Activated CD4-positive, alpha-beta memory T cell treated with anti-CD3 and anti-CD28 coated beads for 36 hours (primary cell): ENCODE measurements at regions of chr2 and their contacts with region 1.

Region 1: DNA sequence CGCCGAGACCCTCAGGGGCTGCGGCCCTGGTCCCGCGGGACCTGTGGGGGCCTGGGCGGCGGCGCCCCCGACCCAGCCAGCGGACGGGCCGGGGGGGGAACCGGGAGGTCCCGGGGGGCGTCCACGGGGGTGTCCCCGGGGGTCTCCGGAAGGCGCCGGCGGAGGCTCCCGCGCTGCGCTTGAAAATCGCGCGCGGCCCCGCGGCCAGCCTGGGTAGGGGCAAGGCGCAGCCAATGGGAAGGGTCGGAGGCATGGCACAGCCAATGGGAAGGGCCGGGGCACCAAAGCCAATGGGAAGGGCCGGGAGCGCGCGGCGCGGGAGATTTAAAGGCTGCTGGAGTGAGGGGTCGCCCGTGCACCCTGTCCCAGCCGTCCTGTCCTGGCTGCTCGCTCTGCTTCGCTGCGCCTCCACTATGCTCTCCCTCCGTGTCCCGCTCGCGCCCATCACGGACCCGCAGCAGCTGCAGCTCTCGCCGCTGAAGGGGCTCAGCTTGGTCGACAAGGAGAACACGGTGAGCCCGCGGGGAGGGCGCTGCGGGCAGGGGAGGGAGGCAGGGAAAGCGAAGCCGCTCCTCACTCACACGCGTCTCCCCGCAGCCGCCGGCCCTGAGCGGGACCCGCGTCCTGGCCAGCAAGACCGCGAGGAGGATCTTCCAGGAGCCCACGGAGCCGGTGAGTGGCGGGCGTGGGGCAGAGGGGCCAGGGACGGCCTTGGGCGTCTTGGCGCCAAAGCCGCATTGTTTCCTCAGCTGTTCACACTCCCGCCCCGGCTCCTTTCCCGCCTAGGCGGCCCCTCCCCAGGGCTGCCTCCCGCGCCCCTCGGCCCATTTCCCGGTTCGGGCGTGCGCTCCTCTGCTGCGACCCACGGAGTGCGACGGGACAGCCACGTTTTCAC is at the start of gene RRM2:
- DNase-seq: peak; percentile 97
- H3K4me3 Mint-ChIP-seq: peak within 1 kb of the TSS; percentile 97
- H3K27ac Mint-ChIP-seq: peak within 1 kb of the TSS; percentile 97
- H3K4me1 Mint-ChIP-seq: peaks cover 49% of the 10 kb centered on the region
- H3K27me3 Mint-ChIP-seq: peaks cover 3% of the 10 kb centered on the region
- total RNA-seq, gene RRM2: 523 to 528 TPM

Region 2: DNA sequence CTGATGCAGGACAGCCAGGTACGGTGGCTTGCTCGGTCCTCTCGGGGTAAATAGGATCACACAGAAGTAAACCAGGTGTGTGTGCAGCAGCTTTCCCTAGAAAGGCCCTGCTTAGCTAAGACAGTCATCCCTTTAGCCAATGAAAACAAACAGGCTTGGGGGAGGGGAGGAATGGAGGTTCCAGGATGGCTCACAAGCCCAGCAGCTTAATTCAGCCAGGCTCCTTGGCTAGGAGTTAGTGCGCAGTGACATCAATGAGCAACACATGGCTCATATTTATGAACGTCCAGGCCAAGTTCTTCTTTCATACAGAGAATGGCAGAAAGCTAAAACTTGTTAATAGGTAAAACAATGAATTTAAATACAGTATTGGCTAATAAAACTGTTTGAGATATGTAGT is 638.1 kb before region 1 on chr2:
- CTCF ChIA-PET with region 1: no interaction called
- POLR2A ChIA-PET with region 1: no interaction called
- intact Hi-C with region 1: no loop called
- DNase-seq: no peak
- H3K4me3 Mint-ChIP-seq: no peak overlapping the region
- H3K27ac Mint-ChIP-seq: no peak overlapping the region
- H3K4me1 Mint-ChIP-seq: peaks cover 23% of the 10 kb centered on the region
- H3K27me3 Mint-ChIP-seq: no peaks in the 10 kb centered on the region

Region 3: GRCh38 chr2:9656270-9656766 is 466.3 kb before region 1 on chr2:
- CTCF ChIA-PET with region 1: no interaction called
- POLR2A ChIA-PET with region 1: no interaction called
- intact Hi-C with region 1: loop called (anchors 2 kb)
- DNase-seq: peak; percentile 90
- H3K4me3 Mint-ChIP-seq: peak overlapping the region; percentile 40
- H3K27ac Mint-ChIP-seq: peak overlapping the region; percentile 94
- H3K4me1 Mint-ChIP-seq: peaks cover 43% of the 10 kb centered on the region
- H3K27me3 Mint-ChIP-seq: peaks cover 9% of the 10 kb centered on the region

Region 4: GRCh38 chr2:9993488-9994165 is 129.0 kb before region 1 on chr2:
- CTCF ChIA-PET with region 1: no interaction called
- POLR2A ChIA-PET with region 1: no interaction called
- intact Hi-C with region 1: no loop called
- DNase-seq: peak; percentile 57
- H3K4me3 Mint-ChIP-seq: no peak overlapping the region
- H3K27ac Mint-ChIP-seq: no peak overlapping the region
- H3K4me1 Mint-ChIP-seq: peaks cover 17% of the 10 kb centered on the region
- H3K27me3 Mint-ChIP-seq: no peaks in the 10 kb centered on the region

Region 5: GRCh38 chr2:10043906-10044601 is 78.6 kb before region 1 on chr2:
- CTCF ChIA-PET with region 1: no interaction called
- POLR2A ChIA-PET with region 1: interaction called, 3 read pairs
- intact Hi-C with region 1: loop called (anchors 2 kb)
- DNase-seq: peak; percentile 94
- H3K4me3 Mint-ChIP-seq: peak overlapping the region; percentile 64
- H3K27ac Mint-ChIP-seq: peak overlapping the region; percentile 47
- H3K4me1 Mint-ChIP-seq: peaks cover 22% of the 10 kb centered on the region
- H3K27me3 Mint-ChIP-seq: peaks cover 3% of the 10 kb centered on the region

Region 6: GRCh38 chr2:10135296-10136089 is 12.9 kb after region 1 on chr2:
- CTCF ChIA-PET with region 1: interaction called, 19 read pairs
- POLR2A ChIA-PET with region 1: interaction called, 10 read pairs
- intact Hi-C with region 1: no loop called
- DNase-seq: no peak
- H3K4me3 Mint-ChIP-seq: no peak overlapping the region
- H3K27ac Mint-ChIP-seq: no peak overlapping the region
- H3K4me1 Mint-ChIP-seq: peaks cover 11% of the 10 kb centered on the region
- H3K27me3 Mint-ChIP-seq: no peaks in the 10 kb centered on the region

Region 7: GRCh38 chr2:10157293-10157692 is 34.7 kb after region 1 on chr2:
- CTCF ChIA-PET with region 1: no interaction called
- POLR2A ChIA-PET with region 1: no interaction called
- intact Hi-C with region 1: no loop called
- DNase-seq: no peak
- H3K4me3 Mint-ChIP-seq: no peak overlapping the region
- H3K27ac Mint-ChIP-seq: no peak overlapping the region
- H3K4me1 Mint-ChIP-seq: peaks cover 5% of the 10 kb centered on the region
- H3K27me3 Mint-ChIP-seq: no peaks in the 10 kb centered on the region

Region 8: DNA sequence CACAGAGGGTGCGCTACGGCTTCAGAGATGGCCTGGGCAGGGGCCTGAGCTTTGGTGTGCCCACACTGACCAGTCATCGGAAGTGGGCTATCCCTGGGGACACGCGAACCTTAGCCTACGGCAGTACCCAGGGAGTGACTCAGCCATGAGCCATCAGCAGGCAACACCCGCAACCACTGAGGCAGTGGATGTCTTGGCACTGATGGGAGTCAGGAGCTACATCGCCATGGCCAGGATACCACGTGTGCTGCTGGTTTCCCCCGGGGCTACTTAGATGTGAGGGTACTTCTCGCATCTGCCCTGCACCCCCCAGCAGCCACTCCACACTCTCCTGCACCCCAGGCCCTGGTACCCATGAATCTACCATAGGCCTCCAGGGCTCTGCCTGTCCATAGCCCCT is 167.3 kb after region 1 on chr2:
- CTCF ChIA-PET with region 1: no interaction called
- POLR2A ChIA-PET with region 1: no interaction called
- intact Hi-C with region 1: no loop called
- DNase-seq: no peak
- H3K4me3 Mint-ChIP-seq: no peak overlapping the region
- H3K27ac Mint-ChIP-seq: no peak overlapping the region
- H3K4me1 Mint-ChIP-seq: no peaks in the 10 kb centered on the region
- H3K27me3 Mint-ChIP-seq: no peaks in the 10 kb centered on the region

Region 9: GRCh38 chr2:10331027-10331701 is 208.5 kb after region 1 on chr2:
- CTCF ChIA-PET with region 1: interaction called, 5 read pairs
- POLR2A ChIA-PET with region 1: interaction called, 8 read pairs
- intact Hi-C with region 1: loop called (anchors 1 kb)
- DNase-seq: peak; percentile 91
- H3K4me3 Mint-ChIP-seq: peak overlapping the region; percentile 86
- H3K27ac Mint-ChIP-seq: peak overlapping the region; percentile 90
- H3K4me1 Mint-ChIP-seq: peaks cover 76% of the 10 kb centered on the region
- H3K27me3 Mint-ChIP-seq: no peaks in the 10 kb centered on the region

Region 10: DNA sequence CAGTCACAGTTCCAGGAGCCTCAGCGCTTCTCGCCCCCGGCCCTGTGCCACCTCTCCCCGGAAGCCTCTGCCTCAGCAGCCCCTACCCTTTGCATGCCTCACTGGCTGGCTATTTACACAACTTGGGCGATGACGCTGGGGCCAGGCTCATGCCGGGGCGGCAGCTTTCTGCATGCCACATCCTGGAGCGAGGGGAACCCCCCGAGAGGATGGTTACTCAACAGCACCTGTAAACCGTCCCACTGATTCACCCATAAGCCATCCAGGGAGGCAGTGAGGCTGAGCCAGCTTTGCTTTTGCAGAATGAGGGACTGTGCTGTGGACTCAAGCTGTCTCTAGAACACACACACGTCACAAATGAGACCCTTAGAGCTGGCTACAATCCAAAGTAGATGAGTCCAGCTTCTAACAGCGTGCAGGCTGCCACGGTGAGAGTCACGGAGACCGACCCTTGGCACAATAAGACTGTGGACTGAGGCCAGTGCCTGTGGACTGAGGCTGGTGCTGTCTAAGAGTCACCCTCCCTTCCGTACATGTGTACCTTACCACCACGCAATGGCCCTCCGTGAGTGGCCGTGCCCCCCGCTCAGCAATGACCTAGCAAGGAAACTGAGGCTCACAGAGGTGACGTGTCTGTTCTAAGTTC is 371.1 kb after region 1 on chr2:
- CTCF ChIA-PET with region 1: no interaction called
- POLR2A ChIA-PET with region 1: no interaction called
- intact Hi-C with region 1: loop called (anchors 1 kb)
- DNase-seq: peak; percentile 96
- H3K4me3 Mint-ChIP-seq: peak overlapping the region; percentile 21
- H3K27ac Mint-ChIP-seq: peak overlapping the region; percentile 83
- H3K4me1 Mint-ChIP-seq: peaks cover 41% of the 10 kb centered on the region
- H3K27me3 Mint-ChIP-seq: peaks cover 10% of the 10 kb centered on the region